Activated B cell treated with CpG ODN at 0.5 μM for 24 hours (primary cell): ENCODE measurements at regions of chr2 and their contacts with region 1.

Region 1: GRCh38 chr2:10832203-10832936 is 19.8 kb upstream of the PDIA6 start:
- DNase-seq: peak; percentile 69
- ATAC-seq: peak; percentile 92
- H3K4me3 Mint-ChIP-seq: no peak overlapping the region
- H3K27ac Mint-ChIP-seq: no peak overlapping the region
- H3K4me1 Mint-ChIP-seq: peaks cover 8% of the 10 kb centered on the region
- H3K27me3 Mint-ChIP-seq: peaks cover 37% of the 10 kb centered on the region
- CTCF ChIP-seq: peak; percentile 88

Region 2: DNA sequence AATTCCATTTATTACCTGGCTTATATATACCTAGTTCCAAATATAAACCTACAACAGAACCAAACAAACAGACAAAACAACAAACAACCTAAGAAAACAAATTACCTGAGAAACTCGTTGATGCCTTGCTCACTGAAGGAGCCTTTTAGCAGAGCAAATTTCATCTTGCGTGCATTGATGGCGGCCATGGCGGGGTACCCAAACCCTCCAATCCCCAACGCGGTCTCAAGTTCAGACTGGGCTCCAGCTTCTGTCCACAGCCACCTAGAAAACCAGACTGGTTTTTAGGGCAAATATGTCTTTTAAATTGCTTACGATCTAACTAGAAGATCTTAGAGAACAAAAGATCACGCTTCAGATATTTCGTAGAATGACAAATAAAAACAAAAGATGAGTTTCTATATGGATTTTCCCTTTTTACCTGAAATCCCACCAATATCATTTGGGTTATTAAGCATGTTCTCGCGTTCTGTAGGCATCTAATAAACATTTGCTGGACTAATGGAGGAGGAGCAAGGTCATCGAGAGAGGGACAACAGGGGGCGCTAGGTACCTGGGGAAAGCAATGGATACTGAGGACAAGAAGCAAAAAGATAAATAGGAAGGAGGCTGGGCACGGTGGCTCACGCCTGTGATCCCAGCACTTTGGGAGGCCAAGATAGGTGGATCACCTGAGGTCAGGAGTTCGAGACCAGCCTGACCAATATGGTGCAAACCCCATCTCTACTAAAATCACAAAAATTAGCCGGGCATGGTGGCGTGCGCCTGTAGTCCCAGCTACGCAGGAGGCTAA is 45.0 kb before region 1 on chr2:
- CTCF ChIA-PET with region 1: interaction called, 3 read pairs
- POLR2A ChIA-PET with region 1: no interaction called
- intact Hi-C with region 1: loop called (anchors 1 kb)
- DNase-seq: no peak
- ATAC-seq: peak; percentile 31
- H3K4me3 Mint-ChIP-seq: no peak overlapping the region
- H3K27ac Mint-ChIP-seq: no peak overlapping the region
- H3K4me1 Mint-ChIP-seq: peaks cover 2% of the 10 kb centered on the region
- H3K27me3 Mint-ChIP-seq: no peaks in the 10 kb centered on the region
- CTCF ChIP-seq: no peak

Region 3: GRCh38 chr2:10900216-10901109 is 68.1 kb after region 1 on chr2:
- CTCF ChIA-PET with region 1: interaction called, 4 read pairs
- POLR2A ChIA-PET with region 1: no interaction called
- intact Hi-C with region 1: loop called (anchors 2 kb)
- DNase-seq: no peak
- ATAC-seq: no peak
- H3K4me3 Mint-ChIP-seq: no peak overlapping the region
- H3K27ac Mint-ChIP-seq: no peak overlapping the region
- H3K4me1 Mint-ChIP-seq: no peaks in the 10 kb centered on the region
- H3K27me3 Mint-ChIP-seq: peaks cover 23% of the 10 kb centered on the region
- CTCF ChIP-seq: no peak

Region 4: DNA sequence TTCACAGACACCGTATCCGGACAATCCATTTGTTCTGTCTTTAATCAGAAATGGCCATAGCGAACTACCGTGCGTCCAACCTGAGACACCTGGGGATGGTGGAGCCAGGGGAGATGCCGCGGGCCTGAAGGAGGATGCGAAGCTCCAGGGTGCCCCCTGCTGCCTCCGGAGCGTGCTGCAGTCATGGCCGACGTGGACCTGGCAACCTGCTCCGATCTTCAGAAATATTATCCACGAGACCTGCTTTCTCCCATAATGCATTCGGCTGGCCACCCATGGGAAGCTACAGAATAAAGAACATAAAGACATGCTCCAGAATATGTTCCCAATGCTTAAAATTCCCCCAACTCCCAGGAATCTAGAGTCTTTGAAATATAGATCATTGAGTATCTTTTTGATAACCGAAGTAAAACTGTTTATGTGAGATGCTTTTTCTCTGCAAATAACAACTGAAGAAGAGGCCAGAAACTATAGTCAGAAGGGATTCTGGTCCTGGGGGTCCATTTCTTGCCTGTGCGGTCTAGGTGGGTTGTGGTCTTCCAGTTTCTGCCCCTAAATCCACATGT is 292.2 kb after region 1 on chr2:
- CTCF ChIA-PET with region 1: interaction called, 22 read pairs
- POLR2A ChIA-PET with region 1: no interaction called
- intact Hi-C with region 1: loop called (anchors 1 kb)
- DNase-seq: no peak
- ATAC-seq: peak; percentile 57
- H3K4me3 Mint-ChIP-seq: no peak overlapping the region
- H3K27ac Mint-ChIP-seq: no peak overlapping the region
- H3K4me1 Mint-ChIP-seq: peaks cover 14% of the 10 kb centered on the region
- H3K27me3 Mint-ChIP-seq: peaks cover 2% of the 10 kb centered on the region
- CTCF ChIP-seq: no peak

Region 5: GRCh38 chr2:11234309-11234708 is 401.9 kb after region 1 on chr2:
- CTCF ChIA-PET with region 1: no interaction called
- POLR2A ChIA-PET with region 1: no interaction called
- intact Hi-C with region 1: loop called (anchors 10 kb)
- DNase-seq: no peak
- ATAC-seq: no peak
- H3K4me3 Mint-ChIP-seq: no peak overlapping the region
- H3K27ac Mint-ChIP-seq: no peak overlapping the region
- H3K4me1 Mint-ChIP-seq: peaks cover 5% of the 10 kb centered on the region
- H3K27me3 Mint-ChIP-seq: no peaks in the 10 kb centered on the region
- CTCF ChIP-seq: no peak

Region 6: DNA sequence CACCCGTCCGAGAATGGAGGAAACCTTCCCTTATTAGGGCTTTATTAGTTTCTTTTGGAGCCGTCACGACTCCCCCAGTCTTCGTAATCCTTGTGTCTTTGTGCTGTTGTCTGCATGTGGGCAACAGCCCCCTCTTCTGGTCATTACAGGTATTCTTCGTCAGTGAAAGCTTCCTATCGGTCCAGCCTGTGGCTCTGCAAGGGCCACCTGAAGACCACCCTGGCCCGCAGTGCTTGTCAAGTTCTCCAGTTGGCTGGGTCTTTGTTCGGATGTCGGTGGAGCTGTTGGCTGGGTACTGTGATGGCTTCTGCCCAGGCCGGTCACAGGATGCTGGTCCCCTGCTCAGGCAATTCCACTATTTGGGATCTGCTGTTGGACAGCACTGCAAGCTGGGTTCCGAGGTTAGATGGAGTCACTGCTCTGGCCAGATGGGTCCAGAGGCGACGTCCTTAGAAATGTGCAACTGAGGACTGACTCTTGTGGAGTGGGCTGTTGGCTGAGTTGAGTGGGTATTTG is 614.4 kb after region 1 on chr2:
- CTCF ChIA-PET with region 1: interaction called, 4 read pairs
- POLR2A ChIA-PET with region 1: no interaction called
- intact Hi-C with region 1: loop called (anchors 1 kb)
- DNase-seq: peak; percentile 19
- ATAC-seq: peak; percentile 65
- H3K4me3 Mint-ChIP-seq: no peak overlapping the region
- H3K27ac Mint-ChIP-seq: no peak overlapping the region
- H3K4me1 Mint-ChIP-seq: no peaks in the 10 kb centered on the region
- H3K27me3 Mint-ChIP-seq: no peaks in the 10 kb centered on the region
- CTCF ChIP-seq: peak; percentile 18

Region 7: GRCh38 chr2:11583840-11584524 is 751.6 kb after region 1 on chr2:
- CTCF ChIA-PET with region 1: interaction called, 5 read pairs
- POLR2A ChIA-PET with region 1: no interaction called
- intact Hi-C with region 1: loop called (anchors 1 kb)
- DNase-seq: no peak
- ATAC-seq: peak; percentile 89
- H3K4me3 Mint-ChIP-seq: no peak overlapping the region
- H3K27ac Mint-ChIP-seq: no peak overlapping the region
- H3K4me1 Mint-ChIP-seq: no peaks in the 10 kb centered on the region
- H3K27me3 Mint-ChIP-seq: peaks cover 8% of the 10 kb centered on the region
- CTCF ChIP-seq: no peak